Activated CD8-positive, alpha-beta T cell treated with anti-CD3 and anti-CD28 coated beads, Interleukin-2, amount 10 ng/mL, durations not matched to agents 7 days and 5 days (primary cell): ENCODE measurements at regions of chr3 and their contacts with region 1.

Region 1: GRCh38 chr3:158845765-158846350 is 44.0 kb downstream of the MFSD1 start:
- DNase-seq: peak; percentile 53
- ATAC-seq: no peak
- H3K4me3 Mint-ChIP-seq: no peak overlapping the region
- H3K27ac Mint-ChIP-seq: no peak overlapping the region
- H3K4me1 Mint-ChIP-seq: peaks cover 18% of the 10 kb centered on the region
- H3K27me3 Mint-ChIP-seq: no peaks in the 10 kb centered on the region

Region 2: GRCh38 chr3:158961911-158962310 is 116.1 kb after region 1 on chr3:
- CTCF ChIA-PET with region 1: no interaction called
- POLR2A ChIA-PET with region 1: no interaction called
- DNase-seq: no peak
- ATAC-seq: no peak
- H3K4me3 Mint-ChIP-seq: no peak overlapping the region
- H3K27ac Mint-ChIP-seq: no peak overlapping the region
- H3K4me1 Mint-ChIP-seq: no peaks in the 10 kb centered on the region
- H3K27me3 Mint-ChIP-seq: no peaks in the 10 kb centered on the region

Region 3: DNA sequence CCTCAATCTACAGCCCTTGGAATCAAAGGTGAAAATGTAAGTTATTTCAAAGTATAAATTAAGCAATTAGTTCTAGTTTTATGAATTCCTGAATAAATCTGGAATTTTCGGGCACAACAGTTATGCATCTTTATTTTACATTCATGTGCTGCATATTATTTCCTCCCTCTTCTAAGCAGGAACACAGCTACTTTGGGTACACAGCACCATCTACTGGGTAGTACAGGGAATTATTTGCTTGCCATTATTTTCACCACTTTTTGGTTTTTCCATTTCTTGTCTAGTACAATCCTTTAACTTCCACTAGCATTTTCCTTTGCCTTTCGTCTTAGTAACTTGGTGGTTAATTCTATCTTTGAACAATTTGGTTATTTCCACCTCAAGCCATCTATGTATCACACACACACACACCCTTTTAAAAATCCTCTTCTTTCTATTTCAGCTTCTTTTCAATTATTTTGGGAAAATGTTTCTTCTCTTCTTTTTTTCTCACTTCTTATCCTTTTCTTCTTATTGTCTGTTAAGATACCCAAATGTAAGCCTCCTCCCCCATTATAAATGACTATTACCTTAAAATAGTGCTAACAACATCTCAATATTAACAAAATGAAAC is 407.0 kb after region 1 on chr3:
- CTCF ChIA-PET with region 1: interaction called, 70 read pairs
- POLR2A ChIA-PET with region 1: no interaction called
- DNase-seq: peak; percentile 22
- ATAC-seq: no peak
- H3K4me3 Mint-ChIP-seq: no peak overlapping the region
- H3K27ac Mint-ChIP-seq: no peak overlapping the region
- H3K4me1 Mint-ChIP-seq: no peaks in the 10 kb centered on the region
- H3K27me3 Mint-ChIP-seq: peaks cover 4% of the 10 kb centered on the region

Region 4: DNA sequence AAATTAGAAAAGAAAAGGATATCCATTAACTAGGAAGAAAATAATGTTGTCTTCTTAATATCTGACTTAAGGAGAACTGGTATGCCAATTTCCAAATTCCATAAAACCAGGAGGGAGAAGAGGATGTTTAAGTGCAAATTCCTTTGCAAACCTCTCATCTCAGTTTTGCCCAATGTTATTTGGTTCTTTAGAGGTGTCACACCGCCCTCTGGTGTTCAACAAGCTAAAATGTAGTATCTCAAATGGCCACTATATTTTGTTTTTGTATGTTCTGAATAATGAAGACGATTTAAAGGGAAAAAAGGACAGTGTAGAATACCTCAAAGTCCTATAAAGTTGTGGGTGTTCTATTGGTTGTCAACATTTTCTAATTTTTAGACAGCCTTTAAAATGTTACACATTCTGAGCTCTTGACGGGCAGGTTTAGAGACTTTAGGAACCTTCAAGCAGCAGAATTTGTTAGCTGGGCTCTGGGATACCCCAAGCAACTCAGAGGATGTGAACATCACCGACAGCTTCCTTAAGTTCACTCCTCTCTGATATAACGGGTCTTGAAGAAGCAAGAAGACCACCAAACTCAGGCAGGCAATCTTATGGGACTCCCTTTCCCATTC is 414.3 kb after region 1 on chr3:
- CTCF ChIA-PET with region 1: interaction called, 70 read pairs
- POLR2A ChIA-PET with region 1: interaction called, 4 read pairs
- DNase-seq: peak; percentile 61
- ATAC-seq: no peak
- H3K4me3 Mint-ChIP-seq: no peak overlapping the region
- H3K27ac Mint-ChIP-seq: no peak overlapping the region
- H3K4me1 Mint-ChIP-seq: no peaks in the 10 kb centered on the region
- H3K27me3 Mint-ChIP-seq: peaks cover 2% of the 10 kb centered on the region